Calu3 (cell line): ENCODE measurements at regions of chr4 and their contacts with region 1.

Region 1: DNA sequence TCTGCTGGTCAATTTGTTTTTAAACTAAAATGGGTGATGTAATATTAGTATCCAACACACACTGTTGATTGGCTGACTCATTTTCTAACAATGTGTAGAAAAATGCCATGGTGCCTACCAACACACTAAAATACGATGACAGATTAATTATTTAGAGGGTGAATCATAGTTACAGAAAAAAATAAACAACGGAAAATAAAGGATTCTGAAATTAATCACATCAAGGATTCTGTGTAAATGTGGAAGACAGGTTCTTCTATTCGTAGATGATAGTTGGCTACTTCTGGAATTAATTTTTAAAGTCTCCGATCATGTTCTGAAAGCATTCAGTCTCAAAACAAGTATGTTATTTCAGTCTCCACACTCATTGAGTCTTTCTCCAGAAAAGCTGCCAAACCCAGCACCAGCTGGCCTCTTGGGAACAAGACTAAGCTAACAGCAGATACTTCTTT is 8.2 kb upstream of the IQCM start:
- DNase-seq: no peak
- H3K4me3 Mint-ChIP-seq: no peak overlapping the region
- H3K27ac Mint-ChIP-seq: peak overlapping the region; percentile 83
- H3K4me1 Mint-ChIP-seq: peaks cover 26% of the 10 kb centered on the region
- H3K27me3 Mint-ChIP-seq: no peaks in the 10 kb centered on the region
- CTCF ChIP-seq: no peak

Region 2: DNA sequence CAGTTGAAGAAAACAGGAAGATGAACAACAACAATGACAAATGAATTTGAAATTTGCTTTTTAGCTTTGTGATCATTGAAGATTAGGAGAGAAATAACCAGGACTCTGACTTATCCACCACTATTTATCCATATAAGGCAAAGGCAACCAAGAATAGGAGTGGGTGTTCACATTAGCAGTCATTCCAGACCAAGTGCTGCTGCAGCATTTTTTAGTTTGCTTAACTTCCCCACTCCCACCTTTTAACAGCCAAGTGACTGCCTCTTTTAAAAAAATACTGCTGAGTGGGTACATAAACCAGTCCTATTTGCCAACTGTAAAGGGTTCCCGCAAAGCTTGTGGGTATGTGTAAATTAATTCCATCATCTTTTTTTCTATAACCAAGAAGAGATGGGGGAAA is 239.1 kb before region 1 on chr4:
- CTCF ChIA-PET with region 1: no interaction called
- intact Hi-C with region 1: no loop called
- DNase-seq: no peak
- H3K4me3 Mint-ChIP-seq: no peak overlapping the region
- H3K27ac Mint-ChIP-seq: no peak overlapping the region
- H3K4me1 Mint-ChIP-seq: no peaks in the 10 kb centered on the region
- H3K27me3 Mint-ChIP-seq: no peaks in the 10 kb centered on the region
- CTCF ChIP-seq: no peak

Region 3: GRCh38 chr4:149884046-149884445 is 60.2 kb after region 1 on chr4:
- CTCF ChIA-PET with region 1: no interaction called
- intact Hi-C with region 1: loop called (anchors 10 kb)
- DNase-seq: no peak
- H3K4me3 Mint-ChIP-seq: no peak overlapping the region
- H3K27ac Mint-ChIP-seq: peak overlapping the region; percentile 65
- H3K4me1 Mint-ChIP-seq: peaks cover 16% of the 10 kb centered on the region
- H3K27me3 Mint-ChIP-seq: no peaks in the 10 kb centered on the region
- CTCF ChIP-seq: no peak

Region 4: DNA sequence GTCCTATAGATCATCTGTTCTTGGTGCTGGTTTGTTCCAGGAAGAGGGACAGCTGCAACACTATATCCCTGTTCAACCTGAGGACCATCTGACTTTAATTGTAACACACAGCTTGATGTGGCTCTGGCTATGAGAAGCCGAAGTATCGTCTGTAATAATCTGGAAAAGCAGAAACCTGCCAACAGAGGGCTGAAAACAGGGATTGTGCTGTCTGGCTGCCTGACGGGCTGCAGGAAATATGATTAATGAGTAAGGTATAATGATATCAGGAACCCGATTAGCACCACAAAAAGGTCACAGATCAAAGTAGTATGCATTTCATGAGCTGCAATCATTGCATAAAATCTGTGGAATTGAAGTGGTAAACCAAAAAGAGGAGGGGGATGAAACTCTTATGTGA is 587.7 kb after region 1 on chr4:
- CTCF ChIA-PET with region 1: no interaction called
- intact Hi-C with region 1: no loop called
- DNase-seq: no peak
- H3K4me3 Mint-ChIP-seq: no peak overlapping the region
- H3K27ac Mint-ChIP-seq: no peak overlapping the region
- H3K4me1 Mint-ChIP-seq: peaks cover 7% of the 10 kb centered on the region
- H3K27me3 Mint-ChIP-seq: no peaks in the 10 kb centered on the region
- CTCF ChIP-seq: no peak